ENCODE measurements at regions of chr5 and their contacts with region 1.

Region 1: DNA sequence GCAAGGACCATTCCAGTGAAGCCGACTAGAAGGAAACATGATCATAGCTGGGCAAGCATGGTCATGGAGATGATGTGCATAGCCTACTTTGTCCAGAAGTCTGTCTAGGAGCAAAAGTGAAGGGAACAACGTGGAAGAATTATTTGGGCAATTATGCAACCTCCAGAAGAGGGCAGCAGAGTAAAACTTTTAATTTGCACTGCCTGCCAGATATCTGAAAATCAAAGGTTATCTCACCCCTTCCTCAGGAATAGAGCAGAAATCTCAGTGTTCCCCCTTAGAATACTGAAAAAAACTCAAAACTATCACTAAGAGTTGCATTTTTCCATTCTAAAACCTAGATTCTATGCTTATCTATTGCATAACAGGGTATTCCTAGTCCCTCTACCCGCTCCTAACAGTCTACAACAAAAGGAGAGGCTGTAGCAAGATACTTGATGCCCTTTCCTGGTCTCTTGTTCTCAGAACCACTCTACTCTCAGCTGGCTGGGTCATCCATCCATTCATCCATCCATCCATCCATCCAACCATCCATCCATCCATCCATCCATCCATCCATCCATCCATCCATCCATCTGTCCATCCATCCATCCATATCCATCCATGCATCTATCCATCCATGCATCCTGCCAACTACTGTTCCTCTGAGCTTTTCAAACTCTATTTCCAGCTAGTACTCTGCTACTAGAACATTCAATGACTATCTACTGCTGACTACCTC is 8.4 kb upstream of the SETD9 start:
- DNase-seq: peak; percentile 47 to 55
- ATAC-seq: peak; percentile 89 to 91
- H3K4me3 ChIP-seq: no peak overlapping the region
- H3K27ac ChIP-seq: no peak overlapping the region
- H3K4me1 ChIP-seq: no peaks in the 10 kb centered on the region
- CTCF ChIP-seq: peak; percentile 91
- EP300 ChIP-seq: no peak
- POLR2A ChIP-seq: no peak
- RAD21 ChIP-seq: peak; percentile 91

Region 2: GRCh38 chr5:56447232-56447631 is 453.8 kb before region 1 on chr5:
- CTCF ChIA-PET with region 1: no interaction called
- POLR2A ChIA-PET with region 1: no interaction called
- DNase-seq: peak in 1 of 2 experiments; percentile 33
- ATAC-seq: peak; percentile 34 to 56; a peak in 4 of 6 replicates
- H3K4me3 ChIP-seq: no peak overlapping the region
- H3K27ac ChIP-seq: no peak overlapping the region; a peak in 1 of 6 replicates
- H3K4me1 ChIP-seq: peaks cover under 1% of the 10 kb centered on the region; the same call in 1 of the 3 replicates
- CTCF ChIP-seq: no peak
- EP300 ChIP-seq: no peak
- POLR2A ChIP-seq: no peak
- RAD21 ChIP-seq: no peak

Region 3: DNA sequence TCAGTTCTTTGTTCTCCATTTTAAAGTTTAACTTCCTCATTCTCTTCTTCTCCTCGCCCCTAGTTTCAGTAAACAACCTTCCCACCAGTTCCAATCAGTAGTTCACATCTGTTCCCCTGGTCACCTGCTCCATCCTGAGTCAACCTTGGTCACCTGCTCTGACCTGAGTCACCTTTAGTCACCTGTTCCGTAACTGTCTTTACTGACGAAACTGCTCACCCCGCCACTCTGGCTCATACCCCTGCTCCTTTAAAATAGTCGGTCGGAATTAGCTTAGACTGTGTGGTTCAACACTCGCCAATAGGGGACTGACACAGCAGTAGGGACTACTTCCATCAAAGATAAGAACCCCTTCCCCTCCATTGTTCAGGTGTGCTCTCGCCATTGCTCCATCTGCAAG is 196.5 kb after region 1 on chr5:
- CTCF ChIA-PET with region 1: no interaction called
- POLR2A ChIA-PET with region 1: no interaction called
- DNase-seq: no peak
- ATAC-seq: no peak
- H3K4me3 ChIP-seq: no peak overlapping the region
- H3K27ac ChIP-seq: no peak overlapping the region
- H3K4me1 ChIP-seq: peaks cover 3% of the 10 kb centered on the region
- CTCF ChIP-seq: no peak
- EP300 ChIP-seq: no peak
- POLR2A ChIP-seq: no peak
- RAD21 ChIP-seq: no peak

Region 4: DNA sequence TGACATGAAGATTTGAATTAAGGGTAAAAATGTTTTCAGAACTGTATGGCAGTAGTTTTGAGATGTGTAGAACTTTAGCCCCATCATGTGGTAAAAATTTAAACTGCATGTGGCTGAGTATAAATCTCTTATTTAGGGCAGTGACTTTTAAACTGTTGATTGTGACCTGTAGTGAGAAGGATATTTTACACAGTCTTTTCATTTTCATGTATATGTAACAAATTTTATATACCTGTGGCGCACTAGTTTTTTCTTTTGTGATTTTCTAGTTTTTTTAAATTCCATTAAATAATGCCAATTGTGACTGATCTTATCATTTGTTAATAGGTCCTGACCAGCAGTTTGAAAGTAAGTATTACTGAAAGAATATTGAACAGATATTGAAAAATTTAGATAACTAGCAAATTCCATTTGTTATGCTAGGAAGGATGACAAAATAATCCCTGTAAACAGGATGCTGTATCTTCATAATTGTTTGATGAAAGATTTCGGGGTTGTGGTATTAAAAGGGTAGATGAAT is 320.1 kb after region 1 on chr5:
- CTCF ChIA-PET with region 1: interaction called, 12 read pairs
- POLR2A ChIA-PET with region 1: no interaction called
- DNase-seq: peak; percentile 42 to 63
- ATAC-seq: peak; percentile 73 to 82; a peak in 5 of 6 replicates
- H3K4me3 ChIP-seq: no peak overlapping the region
- H3K27ac ChIP-seq: no peak overlapping the region
- H3K4me1 ChIP-seq: peaks cover 26% of the 10 kb centered on the region; the same call in 2 of the 3 replicates
- CTCF ChIP-seq: peak; percentile 85
- EP300 ChIP-seq: no peak
- POLR2A ChIP-seq: no peak
- RAD21 ChIP-seq: peak; percentile 83 to 84

Region 5: DNA sequence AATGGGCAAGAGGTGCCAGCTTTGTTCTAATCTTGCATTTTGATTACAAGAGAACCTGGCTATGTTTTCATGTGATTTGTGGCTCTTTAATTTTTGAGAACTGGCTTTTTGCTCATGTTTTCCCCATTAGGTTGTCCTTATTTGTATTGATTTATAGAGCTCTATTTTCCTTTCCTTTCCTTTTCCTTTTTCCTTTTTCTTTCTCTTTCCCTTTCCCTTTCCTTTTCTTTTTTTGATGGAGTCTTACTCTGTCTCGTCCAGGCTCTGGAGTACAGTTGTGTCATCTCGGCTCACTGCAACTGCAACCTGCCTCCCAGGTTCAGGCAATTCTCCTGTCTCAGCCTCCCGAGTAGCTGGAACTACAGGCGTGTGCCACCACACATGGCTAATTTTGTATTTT is 328.3 kb after region 1 on chr5:
- CTCF ChIA-PET with region 1: interaction called, 13 read pairs
- POLR2A ChIA-PET with region 1: no interaction called
- DNase-seq: no peak
- ATAC-seq: no peak
- H3K4me3 ChIP-seq: no peak overlapping the region
- H3K27ac ChIP-seq: no peak overlapping the region
- H3K4me1 ChIP-seq: no peaks in the 10 kb centered on the region
- CTCF ChIP-seq: no peak
- EP300 ChIP-seq: no peak
- POLR2A ChIP-seq: no peak
- RAD21 ChIP-seq: no peak

Region 6: GRCh38 chr5:57277085-57277484 is 376.1 kb after region 1 on chr5:
- CTCF ChIA-PET with region 1: interaction called, 32 read pairs
- POLR2A ChIA-PET with region 1: no interaction called
- DNase-seq: peak; percentile 18 to 28
- ATAC-seq: no peak
- H3K4me3 ChIP-seq: no peak overlapping the region
- H3K27ac ChIP-seq: no peak overlapping the region
- H3K4me1 ChIP-seq: no peaks in the 10 kb centered on the region
- CTCF ChIP-seq: peak; percentile 64
- EP300 ChIP-seq: no peak
- POLR2A ChIP-seq: no peak
- RAD21 ChIP-seq: peak; percentile 64 to 75

Measured in A549 (cell line).